WTC11 (cell line): ENCODE measurements at regions of chr9 and their contacts with region 1.

Region 1: GRCh38 chr9:35945341-35946018 is 12.5 kb downstream of the OR2S2 start:
- DNase-seq: peak; percentile 85
- ATAC-seq: peak; percentile 84
- H3K4me3 Mint-ChIP-seq: peak overlapping the region; percentile 57
- H3K27ac Mint-ChIP-seq: no peak overlapping the region; the same call in 1 of the 2 replicates
- H3K4me1 Mint-ChIP-seq: peaks cover 8% of the 10 kb centered on the region; the same call in 1 of the 2 replicates
- H3K27me3 Mint-ChIP-seq: peaks cover 71% of the 10 kb centered on the region
- CTCF ChIP-seq: peak; percentile 56

Region 2: GRCh38 chr9:35910613-35911359 is 34.7 kb before region 1 on chr9:
- CTCF ChIA-PET with region 1: interaction called, 16 read pairs
- POLR2A ChIA-PET with region 1: no interaction called
- DNase-seq: no peak
- ATAC-seq: peak; percentile 11
- H3K4me3 Mint-ChIP-seq: no peak overlapping the region
- H3K27ac Mint-ChIP-seq: peak overlapping the region; percentile 10; the same call in 1 of the 2 replicates
- H3K4me1 Mint-ChIP-seq: peaks cover 43% of the 10 kb centered on the region
- H3K27me3 Mint-ChIP-seq: peaks cover 4% of the 10 kb centered on the region; the same call in 1 of the 2 replicates
- CTCF ChIP-seq: no peak

Region 3: DNA sequence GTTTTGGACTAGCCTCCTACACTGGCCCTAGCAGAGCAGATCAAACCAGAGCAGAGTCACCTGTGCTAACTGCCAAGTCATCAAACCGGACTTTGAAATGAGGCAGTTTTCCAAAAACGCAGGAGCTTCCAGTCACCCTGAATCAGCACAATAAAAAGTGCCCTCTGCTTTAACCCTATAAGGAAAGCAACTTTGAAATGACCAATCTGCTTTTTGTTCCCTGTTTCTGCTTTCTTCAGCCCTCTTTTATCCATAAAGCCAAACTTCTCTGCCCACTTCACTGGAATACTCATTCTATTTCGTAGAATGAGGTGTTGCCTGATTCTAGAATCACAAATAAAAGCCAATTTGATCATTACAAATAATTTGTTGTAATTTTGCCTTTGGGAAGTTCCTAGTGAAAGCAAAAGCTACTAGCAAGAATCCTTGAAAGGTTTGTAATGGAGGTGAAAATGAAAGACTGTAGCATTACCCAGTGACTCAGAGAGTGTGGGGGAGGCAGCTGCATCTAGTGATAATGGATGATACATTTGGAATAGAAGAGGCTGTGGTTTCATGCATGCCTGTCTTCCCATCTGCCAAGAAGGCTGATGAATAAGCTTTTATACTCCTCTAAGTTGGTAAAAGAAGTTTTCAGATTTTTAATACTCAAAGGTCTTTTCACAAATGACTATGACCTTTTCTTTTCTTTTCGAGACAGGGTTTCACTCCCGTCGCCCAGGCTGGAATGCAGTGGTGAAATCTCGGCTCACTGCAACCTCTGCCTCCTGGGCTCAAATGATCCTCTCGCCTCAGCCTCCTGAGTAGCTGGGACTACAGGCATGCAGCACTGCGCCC is 21.3 kb before region 1 on chr9:
- CTCF ChIA-PET with region 1: interaction called, 14 read pairs
- POLR2A ChIA-PET with region 1: no interaction called
- DNase-seq: no peak
- ATAC-seq: no peak
- H3K4me3 Mint-ChIP-seq: no peak overlapping the region
- H3K27ac Mint-ChIP-seq: no peak overlapping the region
- H3K4me1 Mint-ChIP-seq: no peaks in the 10 kb centered on the region
- H3K27me3 Mint-ChIP-seq: peaks cover 4% of the 10 kb centered on the region; the same call in 1 of the 2 replicates
- CTCF ChIP-seq: no peak

Region 4: DNA sequence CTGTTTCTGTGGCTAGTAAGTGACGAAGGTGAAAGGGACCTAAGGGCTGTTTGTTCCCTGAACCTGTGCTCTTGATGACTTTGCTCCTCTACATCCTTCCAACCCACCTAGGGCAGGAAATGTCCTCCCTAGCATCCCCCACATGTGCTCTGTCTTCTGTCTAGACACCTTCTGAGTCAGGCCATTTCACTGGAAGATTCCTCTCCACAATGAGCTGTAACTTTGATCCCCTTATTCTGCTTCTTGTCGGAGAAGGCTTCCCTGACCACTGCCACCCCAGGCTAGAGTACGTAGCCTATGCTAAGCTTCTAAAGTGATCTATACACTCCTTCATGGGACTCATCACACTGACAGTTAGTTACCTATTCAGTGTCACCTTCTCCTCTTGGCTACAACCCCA is 14.5 kb before region 1 on chr9:
- CTCF ChIA-PET with region 1: interaction called, 11 read pairs
- POLR2A ChIA-PET with region 1: no interaction called
- DNase-seq: no peak
- ATAC-seq: no peak
- H3K4me3 Mint-ChIP-seq: no peak overlapping the region
- H3K27ac Mint-ChIP-seq: no peak overlapping the region
- H3K4me1 Mint-ChIP-seq: no peaks in the 10 kb centered on the region
- H3K27me3 Mint-ChIP-seq: peaks cover 14% of the 10 kb centered on the region
- CTCF ChIP-seq: no peak

Region 5: DNA sequence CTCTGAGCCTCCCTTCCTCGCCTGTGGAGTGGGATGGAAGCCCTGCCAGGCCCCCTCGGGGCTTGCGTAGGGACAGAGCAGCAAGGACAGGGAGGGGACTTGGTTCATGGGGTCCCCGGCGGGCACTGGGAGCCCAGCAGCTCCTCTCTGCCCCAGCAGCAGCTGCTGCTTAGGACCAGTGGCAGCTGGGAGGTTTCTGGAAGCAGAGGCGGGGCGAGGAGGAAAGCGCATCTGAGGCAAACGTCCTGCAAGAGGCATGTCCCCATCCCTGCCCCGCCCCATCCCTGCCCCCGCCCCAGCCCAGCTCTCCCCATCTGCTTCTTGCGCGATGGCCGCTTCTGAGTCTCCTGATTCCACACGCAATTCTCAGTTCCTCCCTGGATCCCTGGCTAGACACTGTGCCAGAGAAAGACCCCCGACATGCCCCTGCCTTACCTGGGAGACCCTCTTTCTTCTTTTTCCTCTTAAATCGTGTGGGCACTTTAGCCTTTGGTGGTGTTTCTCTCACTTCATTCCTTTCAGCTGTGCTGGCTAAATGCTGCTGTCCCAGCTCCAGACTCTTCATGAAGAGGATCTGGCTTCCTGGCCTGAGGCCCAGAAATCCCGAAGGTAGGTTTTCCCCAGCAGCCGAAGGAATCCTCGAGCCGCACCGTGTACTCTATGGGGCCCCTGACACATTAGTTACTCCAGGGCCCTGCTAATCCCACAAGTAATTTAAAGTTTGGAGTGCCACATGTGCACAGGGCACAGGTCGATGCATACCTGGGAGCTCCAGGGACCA is 16.8 kb after region 1 on chr9:
- CTCF ChIA-PET with region 1: interaction called, 12 read pairs
- POLR2A ChIA-PET with region 1: no interaction called
- DNase-seq: peak; percentile 29
- ATAC-seq: peak; percentile 77
- H3K4me3 Mint-ChIP-seq: no peak overlapping the region
- H3K27ac Mint-ChIP-seq: no peak overlapping the region
- H3K4me1 Mint-ChIP-seq: peaks cover 5% of the 10 kb centered on the region; the same call in 1 of the 2 replicates
- H3K27me3 Mint-ChIP-seq: peaks cover 33% of the 10 kb centered on the region
- CTCF ChIP-seq: no peak

Region 6: GRCh38 chr9:36166101-36166927 is 220.8 kb after region 1 on chr9:
- CTCF ChIA-PET with region 1: no interaction called
- POLR2A ChIA-PET with region 1: no interaction called
- DNase-seq: peak; percentile 85
- ATAC-seq: peak; percentile 66
- H3K4me3 Mint-ChIP-seq: peak overlapping the region; percentile 68
- H3K27ac Mint-ChIP-seq: no peak overlapping the region
- H3K4me1 Mint-ChIP-seq: peaks cover 44% of the 10 kb centered on the region
- H3K27me3 Mint-ChIP-seq: peaks cover 7% of the 10 kb centered on the region
- CTCF ChIP-seq: peak; percentile 86